HEK293 (cell line): ENCODE measurements at regions of chr6 and their contacts with region 1.

Region 1: DNA sequence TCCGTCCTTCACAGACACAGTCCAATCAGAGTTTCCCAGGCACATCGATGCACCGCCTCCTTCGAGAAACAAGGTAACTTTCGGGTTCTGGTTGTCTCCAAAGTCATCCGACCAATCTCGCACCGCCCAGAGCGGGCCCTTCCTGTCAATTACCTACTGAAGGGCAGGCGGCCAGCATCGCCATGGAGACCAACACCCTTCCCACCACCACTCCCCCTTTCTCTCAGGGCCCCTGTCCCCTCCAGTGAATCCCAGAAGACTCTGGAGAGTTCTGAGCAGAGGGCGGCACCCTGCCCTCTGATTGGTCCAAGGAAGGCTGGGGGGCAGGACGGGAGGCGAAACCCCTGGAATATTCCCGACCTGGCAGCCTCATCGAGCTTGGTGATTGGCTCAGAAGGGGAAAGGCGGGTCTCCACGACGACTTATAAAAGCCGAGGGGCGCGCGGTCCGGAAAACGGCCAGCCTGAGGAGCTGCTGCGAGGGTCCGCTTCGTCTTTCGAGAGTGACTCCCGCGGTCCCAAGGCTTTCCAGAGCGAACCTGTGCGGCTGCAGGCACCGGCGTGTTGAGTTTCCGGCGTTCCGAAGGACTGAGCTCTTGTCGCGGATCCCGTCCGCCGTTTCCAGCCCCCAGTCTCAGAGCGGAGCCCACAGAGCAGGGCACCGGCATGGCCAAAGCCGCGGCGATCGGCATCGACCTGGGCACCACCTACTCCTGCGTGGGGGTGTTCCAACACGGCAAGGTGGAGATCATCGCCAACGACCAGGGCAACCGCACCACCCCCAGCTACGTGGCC is at the start of gene HSPA1B:
- H3K4me3 ChIP-seq: peak within 1 kb of the TSS; percentile 65
- H3K27ac ChIP-seq: peak within 1 kb of the TSS; percentile 69
- H3K4me1 ChIP-seq: no peaks in the 10 kb centered on the region
- CTCF ChIP-seq: peak; percentile 35; the same call in 1 of the 2 replicates

Region 2: DNA sequence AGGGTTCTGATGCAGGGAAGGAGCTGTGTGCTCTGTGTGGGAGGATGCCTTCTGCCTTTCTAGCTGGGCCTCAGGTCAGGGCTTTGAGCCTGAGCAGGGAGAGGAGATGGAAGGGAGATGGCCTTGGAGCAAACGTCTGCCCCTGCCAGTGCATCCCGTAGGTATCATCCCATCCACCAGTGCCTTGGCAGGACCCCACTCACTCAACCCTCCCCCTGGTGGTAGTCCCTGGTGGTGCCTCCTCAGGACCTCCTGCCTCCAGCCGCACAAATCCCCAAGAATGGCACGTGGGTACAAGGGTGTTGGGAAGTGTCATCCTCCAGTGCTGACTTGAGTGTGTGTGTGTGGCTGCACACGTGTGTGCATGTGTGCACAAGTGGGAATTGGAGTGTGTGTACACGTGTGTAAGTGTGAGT is 352.6 kb before region 1 on chr6:
- CTCF ChIA-PET with region 1: no interaction called
- POLR2A ChIA-PET with region 1: no interaction called
- H3K4me3 ChIP-seq: no peak overlapping the region
- H3K27ac ChIP-seq: no peak overlapping the region
- H3K4me1 ChIP-seq: no peaks in the 10 kb centered on the region
- CTCF ChIP-seq: no peak

Region 3: DNA sequence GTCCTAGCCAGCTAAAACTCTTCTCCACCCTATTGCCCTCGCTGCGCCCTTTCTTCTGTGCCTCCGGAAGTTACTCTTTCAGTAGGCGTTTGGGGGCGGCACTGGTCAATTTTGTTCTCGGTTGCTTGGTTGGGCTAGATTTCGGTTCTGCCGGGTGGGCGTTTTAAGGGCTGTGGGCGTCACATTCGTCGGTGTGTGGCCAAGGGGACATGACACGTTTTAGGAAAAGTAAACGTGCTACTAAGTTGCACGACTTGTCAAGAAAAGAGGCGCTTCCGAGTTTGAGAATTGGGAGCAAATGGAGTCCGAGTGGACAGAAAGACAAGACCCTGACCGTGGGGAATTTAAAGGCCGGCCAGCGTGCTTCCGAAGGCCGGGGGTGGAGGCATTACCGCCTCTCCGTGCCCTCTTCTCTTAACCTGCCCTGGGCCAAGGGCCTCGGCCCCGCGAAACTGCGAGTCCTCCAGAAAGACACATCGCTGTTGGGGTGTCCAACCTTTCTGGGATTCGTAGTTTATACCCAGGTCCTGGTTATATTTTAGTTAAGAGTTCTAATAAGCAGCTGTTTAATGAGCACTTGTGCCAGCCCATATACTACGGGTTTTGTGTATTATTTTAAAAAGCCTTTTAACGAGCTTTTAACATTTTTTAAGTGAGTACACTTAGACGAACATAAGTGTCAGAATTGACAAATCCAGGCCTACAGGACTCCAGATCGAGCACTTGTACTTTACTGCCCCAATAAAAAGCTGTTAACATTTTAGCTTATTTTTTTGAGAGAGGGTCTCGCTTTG is 174.4 kb before region 1 on chr6:
- CTCF ChIA-PET with region 1: no interaction called
- POLR2A ChIA-PET with region 1: interaction called, 36 read pairs
- H3K4me3 ChIP-seq: peak overlapping the region; percentile 85
- H3K27ac ChIP-seq: peak overlapping the region; percentile 87
- H3K4me1 ChIP-seq: 0 out of 2 replicates have a peak, but pooled peaks cover 6% of the 10 kb centered on the region
- CTCF ChIP-seq: peak; percentile 35; the same call in 1 of the 2 replicates

Region 4: GRCh38 chr6:31702819-31703522 is 124.5 kb before region 1 on chr6 and contains the start of gene ABHD16A:
- CTCF ChIA-PET with region 1: interaction called, 4 read pairs
- POLR2A ChIA-PET with region 1: interaction called, 24 read pairs
- H3K4me3 ChIP-seq: peak within 1 kb of the TSS; percentile 63
- H3K27ac ChIP-seq: peak within 1 kb of the TSS; percentile 62
- H3K4me1 ChIP-seq: no peaks in the 10 kb centered on the region
- CTCF ChIP-seq: 0 out of 2 replicates have a peak, but pooled peaks have one; percentile 9

Region 5: GRCh38 chr6:31752739-31753319 is 74.7 kb before region 1 on chr6:
- CTCF ChIA-PET with region 1: no interaction called
- POLR2A ChIA-PET with region 1: interaction called, 11 read pairs
- H3K4me3 ChIP-seq: no peak overlapping the region
- H3K27ac ChIP-seq: no peak overlapping the region
- H3K4me1 ChIP-seq: no peaks in the 10 kb centered on the region
- CTCF ChIP-seq: no peak

Region 6: GRCh38 chr6:31795616-31796298 is 31.7 kb before region 1 on chr6 and contains the start of gene VARS1:
- CTCF ChIA-PET with region 1: interaction called, 15 read pairs
- POLR2A ChIA-PET with region 1: interaction called, 138 read pairs
- H3K4me3 ChIP-seq: peak within 1 kb of the TSS; percentile 81
- H3K27ac ChIP-seq: peak within 1 kb of the TSS; percentile 93
- H3K4me1 ChIP-seq: no peaks in the 10 kb centered on the region; the same call in 1 of the 2 replicates
- CTCF ChIP-seq: peak; percentile 100

Region 7: GRCh38 chr6:31862344-31863227 is 35.1 kb after region 1 on chr6 and contains the start of gene NEU1:
- CTCF ChIA-PET with region 1: interaction called, 4 read pairs
- POLR2A ChIA-PET with region 1: interaction called, 92 read pairs
- H3K4me3 ChIP-seq: peak within 1 kb of the TSS; percentile 82
- H3K27ac ChIP-seq: peak within 1 kb of the TSS; percentile 27
- H3K4me1 ChIP-seq: no peaks in the 10 kb centered on the region
- CTCF ChIP-seq: no peak

Region 8: GRCh38 chr6:31971993-31972708 is 144.7 kb after region 1 on chr6 and contains the start of gene DXO:
- CTCF ChIA-PET with region 1: interaction called, 3 read pairs
- POLR2A ChIA-PET with region 1: interaction called, 17 read pairs
- H3K4me3 ChIP-seq: peak within 1 kb of the TSS; percentile 83
- H3K27ac ChIP-seq: peak within 1 kb of the TSS; percentile 74
- H3K4me1 ChIP-seq: peaks cover 5% of the 10 kb centered on the region
- CTCF ChIP-seq: no peak